ENCODE measurements at regions of chr6 and their contacts with region 1.

Region 1: GRCh38 chr6:17599885-17600526 is at the start of gene FAM8A1:
- DNase-seq: peak; percentile 96 to 97
- ATAC-seq: peak; percentile 98 to 99 (median 99)
- H3K4me3 ChIP-seq: peak within 1 kb of the TSS; percentile 51 to 99 (median 84)
- H3K27ac ChIP-seq: peak within 1 kb of the TSS; percentile 78 to 98 (median 94)
- H3K4me1 ChIP-seq: peaks cover 4 to 34% (median 11%) of the 10 kb centered on the region in 9 donors
- H3K27me3 ChIP-seq: no peaks in the 10 kb centered on the region
- CTCF ChIP-seq: peak; percentile 21 to 78 (median 55)
- total RNA-seq, gene FAM8A1: 14.5 to 23.2 (median 16.5) TPM

Region 2: GRCh38 chr6:17167327-17167979 is 432.6 kb before region 1 on chr6:
- intact Hi-C with region 1: no loop called
- DNase-seq: peak; percentile 34 to 55
- ATAC-seq: peak; percentile 67 to 97 (median 89)
- H3K4me3 ChIP-seq: no peak overlapping the region
- H3K27ac ChIP-seq: peak overlapping the region in 4 of 10 donors; percentile 18 to 48 (median 38)
- H3K4me1 ChIP-seq: peaks cover 0 to 6% (median 0%) of the 10 kb centered on the region in 9 donors
- H3K27me3 ChIP-seq: no peaks in the 10 kb centered on the region
- CTCF ChIP-seq: peak in 8 of 9 donors; percentile 33 to 73 (median 50)

Region 3: GRCh38 chr6:17700421-17701416 is 100.7 kb after region 1 on chr6:
- intact Hi-C with region 1: loop called in 2 of 10 experiments (anchors 5 kb)
- DNase-seq: no peak
- ATAC-seq: no peak
- H3K4me3 ChIP-seq: no peak overlapping the region
- H3K27ac ChIP-seq: peak overlapping the region in 7 of 10 donors; percentile 4 to 49 (median 38)
- H3K4me1 ChIP-seq: peaks cover 3 to 84% (median 53%) of the 10 kb centered on the region in 9 donors
- H3K27me3 ChIP-seq: no peaks in the 10 kb centered on the region
- CTCF ChIP-seq: no peak

Region 4: DNA sequence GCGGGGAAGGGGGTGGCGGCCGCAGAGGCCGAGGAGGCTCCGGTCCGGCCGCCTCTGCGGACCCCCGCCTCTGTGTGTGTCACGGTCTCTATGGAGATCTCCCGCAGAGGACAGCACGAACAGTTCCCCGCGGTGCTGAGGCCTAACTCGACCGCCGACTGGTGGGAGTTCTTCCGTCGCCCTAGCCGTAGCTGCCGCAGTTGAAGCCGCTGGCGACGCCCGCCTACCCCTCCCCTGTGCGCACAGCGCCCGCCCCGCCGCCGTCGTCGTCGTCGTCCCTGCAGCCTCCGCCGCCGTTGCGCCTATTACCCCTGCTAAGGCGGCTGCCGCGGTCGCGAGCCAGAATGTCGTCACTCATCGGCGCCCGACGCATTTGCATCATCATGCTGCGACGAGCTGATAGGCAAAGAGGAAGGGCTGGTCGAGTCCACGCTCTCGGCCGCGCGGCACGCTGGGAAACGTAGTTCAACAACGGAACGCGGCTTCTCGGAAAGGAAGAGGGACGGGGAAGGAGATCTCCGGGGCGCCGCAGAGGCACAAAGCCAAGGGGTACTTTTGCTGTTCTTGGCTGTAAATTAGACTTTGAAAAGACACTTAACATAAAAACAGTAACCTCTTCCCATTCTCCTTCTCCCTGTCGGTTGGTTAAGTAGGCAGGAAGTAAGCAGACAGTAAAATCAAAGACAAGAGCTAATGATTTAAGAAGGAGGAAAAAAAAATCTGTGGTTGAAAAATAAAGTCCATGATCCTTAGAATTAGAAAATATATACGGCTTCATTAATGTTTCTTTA is 106.8 kb after region 1 on chr6 and contains the start of gene NUP153:
- intact Hi-C with region 1: loop called in 4 of 10 experiments (anchors 2 to 5 kb)
- DNase-seq: peak; percentile 98 to 99
- ATAC-seq: peak; percentile 86 to 94 (median 88)
- H3K4me3 ChIP-seq: peak within 1 kb of the TSS; percentile 71 to 100 (median 96)
- H3K27ac ChIP-seq: peak within 1 kb of the TSS; percentile 94 to 100 (median 99)
- H3K4me1 ChIP-seq: peaks cover 3 to 47% (median 35%) of the 10 kb centered on the region in 9 donors
- H3K27me3 ChIP-seq: no peaks in the 10 kb centered on the region
- CTCF ChIP-seq: no peak
- total RNA-seq, gene NUP153: 20.7 to 30.5 (median 26.0) TPM

Region 5: GRCh38 chr6:17790489-17790888 is 190.5 kb after region 1 on chr6:
- intact Hi-C with region 1: loop called in 1 of 10 experiments (anchors 10 kb)
- DNase-seq: no peak
- ATAC-seq: no peak
- H3K4me3 ChIP-seq: no peak overlapping the region
- H3K27ac ChIP-seq: no peak overlapping the region
- H3K4me1 ChIP-seq: no peaks in the 10 kb centered on the region
- H3K27me3 ChIP-seq: no peaks in the 10 kb centered on the region
- CTCF ChIP-seq: no peak

Region 6: DNA sequence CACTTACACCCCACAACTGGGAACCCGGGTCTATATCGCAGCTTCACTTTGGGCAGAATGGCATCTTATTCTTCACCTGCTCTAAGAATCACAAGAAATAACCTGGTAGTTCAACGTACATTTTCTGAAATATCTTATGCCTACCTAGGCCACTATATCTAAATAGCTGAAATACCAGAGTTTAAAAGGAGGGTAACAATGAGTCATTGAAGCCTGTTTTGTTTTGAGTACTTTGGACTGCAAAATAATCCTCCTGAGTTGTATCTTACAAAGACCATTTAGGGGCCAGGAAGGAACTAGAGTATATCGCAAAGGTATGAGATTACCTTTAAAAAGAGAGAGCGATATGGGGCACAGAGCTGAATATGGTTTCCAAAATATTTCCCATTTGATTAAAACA is 203.4 kb after region 1 on chr6:
- intact Hi-C with region 1: loop called in 2 of 10 experiments (anchors 5 to 10 kb)
- DNase-seq: no peak
- ATAC-seq: no peak
- H3K4me3 ChIP-seq: no peak overlapping the region
- H3K27ac ChIP-seq: no peak overlapping the region
- H3K4me1 ChIP-seq: no peaks in the 10 kb centered on the region
- H3K27me3 ChIP-seq: no peaks in the 10 kb centered on the region
- CTCF ChIP-seq: no peak

Region 7: DNA sequence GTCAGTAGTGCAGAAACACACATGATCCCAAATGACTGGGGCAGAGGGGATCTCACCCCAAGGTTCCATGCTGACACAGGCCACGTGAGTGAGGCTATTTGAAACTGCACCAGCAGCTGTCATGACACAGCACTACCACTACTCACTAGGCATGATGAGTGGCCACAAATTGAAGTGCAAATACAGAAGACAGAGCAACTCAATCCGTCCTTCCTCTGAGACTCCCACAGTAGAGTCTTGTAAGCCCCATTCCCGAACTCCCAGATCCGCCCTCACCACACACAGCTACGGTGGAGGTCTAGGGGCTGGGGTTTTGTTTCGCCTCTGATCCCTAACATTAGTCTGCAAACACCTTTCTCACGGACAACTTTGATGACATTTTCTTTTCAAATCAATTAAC is 220.0 kb after region 1 on chr6:
- intact Hi-C with region 1: loop called in 1 of 10 experiments (anchors 10 kb)
- DNase-seq: no peak
- ATAC-seq: peak in 4 of 8 donors; percentile 31 to 61 (median 52)
- H3K4me3 ChIP-seq: no peak overlapping the region
- H3K27ac ChIP-seq: no peak overlapping the region
- H3K4me1 ChIP-seq: no peaks in the 10 kb centered on the region
- H3K27me3 ChIP-seq: no peaks in the 10 kb centered on the region
- CTCF ChIP-seq: peak in 1 of 9 donors; percentile 15

Region 8: DNA sequence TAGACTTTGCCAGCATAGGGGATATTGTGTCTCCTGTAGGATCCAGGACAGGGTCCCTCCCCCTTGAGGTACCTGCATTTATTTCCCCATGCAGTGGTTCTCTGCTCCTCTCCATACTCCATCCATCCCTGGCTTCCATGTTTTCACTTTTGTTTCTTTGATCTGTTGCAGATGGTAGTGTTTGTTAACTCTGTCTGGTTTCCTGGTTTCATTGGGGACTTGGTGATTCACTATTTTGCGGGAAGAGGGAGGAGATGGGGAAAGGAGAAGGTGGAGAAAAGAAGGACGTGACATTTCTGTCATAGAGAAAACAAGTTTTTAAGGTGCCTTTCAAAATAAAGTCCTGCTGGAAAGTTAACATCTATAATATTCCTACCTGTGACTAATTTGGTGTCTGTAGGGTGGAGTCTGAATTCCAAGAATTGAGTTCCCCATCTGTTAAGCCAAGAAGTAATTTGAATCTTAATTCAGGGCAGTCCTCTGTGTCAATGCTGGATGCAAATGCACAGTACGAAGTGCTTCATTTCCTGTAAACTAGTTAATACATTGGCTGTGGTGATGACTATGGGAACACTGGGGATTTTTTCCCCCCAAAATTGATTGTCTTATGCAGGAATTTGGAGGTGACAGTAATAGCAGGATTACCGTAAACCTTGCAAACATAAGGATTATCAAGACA is 780.3 kb after region 1 on chr6:
- intact Hi-C with region 1: no loop called
- DNase-seq: no peak
- ATAC-seq: no peak
- H3K4me3 ChIP-seq: no peak overlapping the region
- H3K27ac ChIP-seq: no peak overlapping the region
- H3K4me1 ChIP-seq: peaks cover 0 to 12% (median 8%) of the 10 kb centered on the region in 9 donors
- H3K27me3 ChIP-seq: no peaks in the 10 kb centered on the region
- CTCF ChIP-seq: no peak

Measured in heart right ventricle (tissue), 16 donors.